AG04450 (cell line): ENCODE measurements at regions of chr22 and their contacts with region 1.

Region 1: GRCh38 chr22:36454916-36455570 is 26.4 kb downstream of the TXN2 start:
- DNase-seq: peak; percentile 72
- H3K4me3 ChIP-seq: peak overlapping the region; percentile 50
- H3K27ac ChIP-seq: peak overlapping the region; percentile 52
- H3K27me3 ChIP-seq: no peaks in the 10 kb centered on the region
- CTCF ChIP-seq: peak; percentile 6; the same call in 1 of the 2 replicates

Region 2: DNA sequence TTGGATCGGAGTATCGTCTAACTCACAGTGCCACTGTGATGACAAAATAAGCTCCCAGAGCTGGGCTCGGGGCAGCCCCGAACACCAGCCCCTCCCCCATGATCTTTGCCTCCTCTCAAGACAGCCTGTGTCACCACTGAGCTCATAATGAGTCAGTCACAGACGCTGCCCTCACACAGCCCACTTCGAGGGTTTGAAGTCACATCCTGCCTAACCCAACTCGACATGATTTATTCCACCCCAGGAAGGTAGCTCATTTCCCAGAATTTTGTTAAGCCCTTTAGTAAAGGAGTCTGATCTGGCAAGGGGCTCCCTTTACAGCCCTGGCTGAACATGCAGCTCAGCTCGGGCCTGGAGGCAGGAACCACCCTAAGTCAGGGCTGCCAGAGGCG is 90.0 kb before region 1 on chr22:
- CTCF ChIA-PET with region 1: no interaction called
- POLR2A ChIA-PET with region 1: no interaction called
- DNase-seq: peak; percentile 74
- H3K4me3 ChIP-seq: no peak overlapping the region
- H3K27ac ChIP-seq: peak overlapping the region; percentile 87
- H3K27me3 ChIP-seq: no peaks in the 10 kb centered on the region
- CTCF ChIP-seq: no peak

Region 3: DNA sequence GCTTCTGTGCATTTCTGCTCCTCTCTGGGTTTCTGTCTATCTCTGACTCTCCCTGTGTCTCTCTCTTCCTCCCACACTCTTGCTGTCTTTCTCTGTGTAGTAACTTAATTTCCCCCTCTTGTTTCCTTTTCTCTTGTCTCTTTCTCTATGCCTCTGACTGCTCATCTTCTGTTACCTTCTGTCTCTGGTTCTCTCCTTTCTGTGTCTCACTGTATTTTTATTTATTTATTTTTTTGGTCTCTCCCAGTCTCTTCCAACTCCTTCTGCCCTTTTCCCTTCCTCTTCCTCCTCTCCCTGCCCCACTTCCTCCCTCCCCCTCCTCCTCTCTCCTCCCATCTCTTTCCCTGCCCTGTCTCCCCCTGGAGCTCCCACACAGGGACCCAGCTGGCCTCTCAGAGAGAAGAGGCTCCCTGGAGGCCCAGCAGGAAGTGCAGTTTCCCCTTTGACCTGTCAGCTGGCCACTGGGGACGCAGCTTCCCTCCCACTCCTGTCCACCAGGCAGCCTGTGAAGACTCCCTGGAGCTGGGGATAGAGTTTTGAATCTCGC is 29.0 kb before region 1 on chr22:
- CTCF ChIA-PET with region 1: interaction called, 7 read pairs
- POLR2A ChIA-PET with region 1: interaction called, 18 read pairs
- DNase-seq: no peak
- H3K4me3 ChIP-seq: no peak overlapping the region
- H3K27ac ChIP-seq: peak overlapping the region; percentile 52
- H3K27me3 ChIP-seq: no peaks in the 10 kb centered on the region
- CTCF ChIP-seq: peak; percentile 23